ENCODE measurements at regions of chr11 and their contacts with region 1.

Region 1: GRCh38 chr11:118928108-118928870 is 2.6 kb upstream of the BCL9L start:
- DNase-seq: peak; percentile 97
- H3K4me3 ChIP-seq: peak overlapping the region; percentile 62 to 86 (median 76)
- H3K27ac ChIP-seq: peak overlapping the region; percentile 90 to 99 (median 96)
- H3K4me1 ChIP-seq: peaks cover 39 to 56% (median 53%) of the 10 kb centered on the region in 4 donors
- H3K27me3 ChIP-seq: no peaks in the 10 kb centered on the region
- CTCF ChIP-seq: peak; percentile 90 to 94 (median 91)
- EP300 ChIP-seq: no peak
- POLR2A ChIP-seq: no peak

Region 2: GRCh38 chr11:118689851-118690552 is 238.3 kb before region 1 on chr11:
- intact Hi-C with region 1: loop called (anchors 2 kb)
- DNase-seq: no peak
- H3K4me3 ChIP-seq: peak overlapping the region; percentile 50 to 59 (median 52)
- H3K27ac ChIP-seq: peak overlapping the region; percentile 70 to 82 (median 75)
- H3K4me1 ChIP-seq: peaks cover 14 to 23% (median 21%) of the 10 kb centered on the region in 4 donors
- H3K27me3 ChIP-seq: no peaks in the 10 kb centered on the region
- CTCF ChIP-seq: peak; percentile 61 to 82 (median 79)
- EP300 ChIP-seq: no peak
- POLR2A ChIP-seq: no peak

Region 3: GRCh38 chr11:118789501-118790356 is 138.6 kb before region 1 on chr11:
- intact Hi-C with region 1: loop called (anchors 5 kb)
- DNase-seq: no peak
- H3K4me3 ChIP-seq: peak overlapping the region; percentile 79 to 92 (median 86)
- H3K27ac ChIP-seq: peak overlapping the region; percentile 98 to 100 (median 99)
- H3K4me1 ChIP-seq: peaks cover 38 to 63% (median 60%) of the 10 kb centered on the region in 4 donors
- H3K27me3 ChIP-seq: no peaks in the 10 kb centered on the region
- CTCF ChIP-seq: no peak
- EP300 ChIP-seq: no peak
- POLR2A ChIP-seq: no peak

Region 4: GRCh38 chr11:118895142-118896039 is 32.9 kb before region 1 on chr11:
- intact Hi-C with region 1: loop called (anchors 5 kb)
- DNase-seq: no peak
- H3K4me3 ChIP-seq: no peak overlapping the region
- H3K27ac ChIP-seq: peak overlapping the region in 2 of 4 donors; percentile 18 to 25
- H3K4me1 ChIP-seq: peaks cover 0 to 66% (median 52%) of the 10 kb centered on the region in 4 donors
- H3K27me3 ChIP-seq: peaks cover 0 to 3% (median 0%) of the 10 kb centered on the region in 4 donors
- CTCF ChIP-seq: no peak
- EP300 ChIP-seq: no peak
- POLR2A ChIP-seq: no peak

Region 5: DNA sequence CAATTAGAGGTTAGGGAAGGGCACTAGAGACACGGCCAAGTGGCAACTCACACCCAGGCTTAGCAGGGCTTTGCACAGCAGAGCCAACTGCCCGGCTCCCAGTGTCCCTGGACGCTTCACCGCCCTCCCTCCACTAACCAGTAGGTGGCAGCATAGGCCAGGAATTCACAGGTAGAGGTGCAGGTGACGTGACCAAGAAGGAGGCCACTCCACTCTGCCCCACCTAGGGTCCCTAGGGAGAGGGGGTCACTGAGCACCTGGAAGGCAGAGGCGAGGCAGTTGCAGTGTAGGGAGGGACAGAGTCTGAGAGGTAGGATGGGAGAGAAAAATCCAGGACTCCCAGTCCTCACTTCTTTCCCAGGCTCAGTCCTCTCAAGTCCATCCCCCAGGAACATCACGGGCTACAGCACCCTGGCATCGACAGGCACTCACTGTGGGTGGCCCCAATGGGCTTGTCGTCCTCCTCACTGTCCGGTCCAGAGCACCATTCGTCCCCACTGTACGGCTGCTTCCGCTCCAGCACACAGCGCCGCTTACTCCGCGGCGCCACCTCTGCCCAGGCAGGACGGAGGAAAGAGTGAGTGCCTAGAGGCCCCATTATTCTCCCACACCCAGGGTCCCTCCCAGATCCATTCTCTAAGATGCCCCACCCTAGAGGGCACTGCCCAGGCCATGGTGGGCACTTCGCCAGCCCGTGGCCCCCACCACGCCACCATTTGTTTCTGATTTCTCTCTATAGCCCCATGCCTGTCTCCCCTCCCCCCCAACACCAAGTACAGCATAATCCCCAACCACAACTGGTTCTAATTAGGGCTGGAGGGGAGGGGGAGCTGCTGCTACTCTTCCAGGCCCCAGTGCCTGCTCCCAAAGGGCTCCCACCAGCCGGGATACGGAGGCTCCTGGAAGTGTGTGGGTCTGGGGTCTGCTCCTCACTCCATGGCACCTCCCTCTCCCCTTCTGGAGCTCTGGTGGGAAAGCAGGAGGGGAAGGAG is 20.9 kb before region 1 on chr11:
- intact Hi-C with region 1: loop called (anchors 1 kb)
- DNase-seq: peak; percentile 98
- H3K4me3 ChIP-seq: no peak overlapping the region
- H3K27ac ChIP-seq: peak overlapping the region; percentile 90 to 98 (median 96)
- H3K4me1 ChIP-seq: peaks cover 54 to 77% (median 63%) of the 10 kb centered on the region in 4 donors
- H3K27me3 ChIP-seq: no peaks in the 10 kb centered on the region
- CTCF ChIP-seq: peak; percentile 93 to 97 (median 95)
- EP300 ChIP-seq: no peak
- POLR2A ChIP-seq: no peak

Region 6: DNA sequence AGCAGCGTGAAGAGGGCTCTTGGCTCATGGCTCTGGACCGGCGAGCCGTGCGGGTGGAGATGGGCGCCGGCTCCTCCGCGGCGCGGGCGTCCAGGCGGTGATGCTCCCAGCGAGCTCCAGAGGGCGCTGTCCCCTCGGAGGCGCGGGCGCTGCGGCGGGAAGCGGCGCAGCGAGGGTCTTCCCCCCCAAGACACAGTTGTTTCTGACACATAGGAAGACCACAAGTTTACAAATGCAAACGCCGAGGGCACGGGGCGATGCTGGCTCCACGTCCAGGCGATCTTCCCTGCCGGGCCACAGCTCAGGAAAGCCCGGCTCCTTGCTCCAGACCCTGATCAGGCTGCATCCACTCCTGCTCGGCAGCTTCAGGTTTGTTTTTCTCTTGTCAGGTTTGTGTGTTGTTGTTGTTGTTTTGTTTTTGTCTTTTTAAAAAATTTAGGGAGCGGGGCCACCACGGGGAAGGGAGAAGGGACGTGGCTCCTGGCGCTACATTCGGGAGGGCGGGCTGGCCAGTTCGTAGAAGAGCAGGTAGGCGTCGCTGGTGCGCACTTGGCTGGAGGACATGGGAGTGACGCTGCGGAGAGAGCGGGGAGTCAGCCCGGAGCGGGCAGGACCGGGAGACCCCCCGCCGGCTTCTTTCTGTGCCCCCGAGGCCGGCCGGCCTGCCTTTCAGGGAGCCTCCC is 428.2 kb after region 1 on chr11:
- intact Hi-C with region 1: no loop called
- DNase-seq: no peak
- H3K4me3 ChIP-seq: peak overlapping the region; percentile 48 to 68 (median 62)
- H3K27ac ChIP-seq: peak overlapping the region; percentile 84 to 86 (median 86)
- H3K4me1 ChIP-seq: peaks cover 39 to 58% (median 47%) of the 10 kb centered on the region in 4 donors
- H3K27me3 ChIP-seq: no peaks in the 10 kb centered on the region
- CTCF ChIP-seq: peak; percentile 69 to 96 (median 93)
- EP300 ChIP-seq: no peak
- POLR2A ChIP-seq: no peak

Measured in esophagus muscularis mucosa (tissue), 4 donors.